ENCODE measurements at regions of chr17 and their contacts with region 1.

Region 1: GRCh38 chr17:74780443-74781238 is 4.5 kb upstream of the NAT9 start:
- DNase-seq: no peak
- H3K4me3 Mint-ChIP-seq: peak overlapping the region; percentile 40
- H3K27ac Mint-ChIP-seq: peak overlapping the region; percentile 98
- H3K4me1 Mint-ChIP-seq: peaks cover 65% of the 10 kb centered on the region
- H3K27me3 Mint-ChIP-seq: no peaks in the 10 kb centered on the region

Region 2: DNA sequence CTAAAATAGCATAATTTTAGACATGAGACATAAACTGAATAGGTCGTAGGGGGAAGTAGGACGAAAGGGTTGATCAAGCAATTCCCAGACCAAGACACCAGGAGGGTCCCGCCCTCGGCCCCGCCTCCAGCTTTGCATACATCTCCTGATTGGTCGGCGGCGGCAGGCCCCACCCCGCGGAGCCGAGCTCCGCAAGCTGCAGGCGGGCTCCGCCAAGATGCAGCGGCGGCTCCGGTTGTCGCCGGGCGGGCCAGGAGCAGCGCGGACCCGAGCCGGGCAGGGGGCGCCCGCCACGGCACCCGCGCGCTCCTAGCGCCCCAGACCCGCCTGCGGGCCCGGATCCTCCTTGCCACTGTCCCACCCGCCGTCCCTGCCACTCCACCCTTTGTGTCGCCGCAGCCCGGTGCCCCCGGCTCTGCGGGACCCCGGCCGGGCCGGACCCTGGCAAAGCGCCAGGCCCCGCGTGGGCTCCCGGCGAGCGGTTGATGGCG is 206.8 kb after region 1 on chr17 and contains the start of gene CDR2L:
- intact Hi-C with region 1: loop called (anchors 10 kb)
- DNase-seq: peak; percentile 88
- H3K4me3 Mint-ChIP-seq: peak within 1 kb of the TSS; percentile 83
- H3K27ac Mint-ChIP-seq: no peak within 1 kb of the TSS
- H3K4me1 Mint-ChIP-seq: peaks cover 10% of the 10 kb centered on the region
- H3K27me3 Mint-ChIP-seq: peaks cover 35% of the 10 kb centered on the region
- total RNA-seq, gene CDR2L: 2.3 and 2.4 TPM in 2 replicates

Measured in activated T-helper 2 cell treated with anti-CD3 and anti-CD28 coated beads, Interferon-gamma antibody, Interleukin-2, Interleukin-4, amounts not matched to agents 10 μg/mL and 5 μg/mL and 100 μg/mL, durations not matched to agents 14 hours and 24 hours and 36 hours (primary cell).